Activated B cell treated with CpG ODN at 0.5 μM for 24 hours (primary cell): ENCODE measurements at regions of chr6 and their contacts with region 1.

Region 1: GRCh38 chr6:63598049-63599036 is 26.1 kb downstream of the LOC128125822 start:
- DNase-seq: peak; percentile 53
- ATAC-seq: peak; percentile 100
- H3K4me3 Mint-ChIP-seq: peak overlapping the region; percentile 84
- H3K27ac Mint-ChIP-seq: peak overlapping the region; percentile 35
- H3K4me1 Mint-ChIP-seq: peaks cover 13% of the 10 kb centered on the region
- H3K27me3 Mint-ChIP-seq: no peaks in the 10 kb centered on the region
- CTCF ChIP-seq: peak; percentile 58

Region 2: DNA sequence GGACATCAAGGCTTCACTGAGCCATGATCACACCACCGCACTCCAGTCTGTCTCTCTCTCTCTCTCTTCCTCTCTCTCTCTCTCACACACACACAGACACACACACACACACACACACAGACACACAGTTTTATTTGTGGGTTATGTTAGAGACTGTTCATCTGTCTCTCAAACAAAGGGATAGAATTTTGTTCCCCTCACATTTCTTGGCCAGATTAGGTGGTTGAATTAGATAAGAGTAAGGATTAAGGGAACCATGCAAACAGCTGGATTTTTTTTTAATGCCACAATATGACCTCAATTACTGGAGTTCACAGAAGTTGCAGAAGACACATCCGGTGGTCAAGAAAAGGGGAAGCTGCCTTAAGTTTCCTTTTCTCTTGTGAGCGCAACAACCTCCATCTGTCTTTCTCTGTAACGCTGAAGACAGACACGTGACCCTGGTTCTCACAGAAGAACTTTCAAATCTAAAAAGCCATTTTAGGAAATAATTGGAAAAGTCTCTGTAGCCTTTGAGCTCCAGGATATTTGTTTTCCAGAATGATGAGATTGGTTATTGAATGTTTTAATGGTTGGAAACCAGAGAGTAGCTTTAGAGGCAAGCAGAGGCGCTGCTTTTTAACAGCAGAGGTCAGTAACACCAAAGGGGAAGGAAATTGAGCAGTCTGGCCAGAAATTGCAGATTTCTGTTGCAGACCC is 245.6 kb before region 1 on chr6:
- CTCF ChIA-PET with region 1: interaction called, 11 read pairs
- POLR2A ChIA-PET with region 1: interaction called, 3 read pairs
- intact Hi-C with region 1: loop called (anchors 1 kb)
- DNase-seq: no peak
- ATAC-seq: peak; percentile 77
- H3K4me3 Mint-ChIP-seq: peak overlapping the region; percentile 69
- H3K27ac Mint-ChIP-seq: peak overlapping the region; percentile 63
- H3K4me1 Mint-ChIP-seq: peaks cover 22% of the 10 kb centered on the region
- H3K27me3 Mint-ChIP-seq: no peaks in the 10 kb centered on the region
- CTCF ChIP-seq: no peak

Region 3: DNA sequence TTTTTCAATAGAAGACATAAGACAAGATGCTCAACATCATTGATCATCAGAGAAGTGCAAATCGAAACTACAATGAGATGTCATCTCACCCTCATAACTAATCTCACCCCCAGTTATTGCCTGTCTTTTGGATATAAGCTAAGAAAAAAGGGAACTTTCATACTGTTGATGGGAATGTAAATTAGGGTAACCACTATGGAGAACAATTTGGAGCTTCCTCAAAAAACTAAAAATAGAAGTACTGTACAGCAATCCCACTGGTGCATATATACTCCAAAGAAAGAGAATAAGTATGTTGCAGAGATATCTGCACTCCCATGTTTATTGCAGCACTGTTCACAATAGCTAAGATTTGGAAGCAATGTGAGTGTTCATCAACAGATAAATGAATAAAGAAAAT is 10.9 kb after region 1 on chr6:
- CTCF ChIA-PET with region 1: interaction called, 16 read pairs
- POLR2A ChIA-PET with region 1: interaction called, 5 read pairs
- intact Hi-C with region 1: no loop called
- DNase-seq: no peak
- ATAC-seq: no peak
- H3K4me3 Mint-ChIP-seq: no peak overlapping the region
- H3K27ac Mint-ChIP-seq: no peak overlapping the region
- H3K4me1 Mint-ChIP-seq: no peaks in the 10 kb centered on the region
- H3K27me3 Mint-ChIP-seq: no peaks in the 10 kb centered on the region
- CTCF ChIP-seq: no peak

Region 4: DNA sequence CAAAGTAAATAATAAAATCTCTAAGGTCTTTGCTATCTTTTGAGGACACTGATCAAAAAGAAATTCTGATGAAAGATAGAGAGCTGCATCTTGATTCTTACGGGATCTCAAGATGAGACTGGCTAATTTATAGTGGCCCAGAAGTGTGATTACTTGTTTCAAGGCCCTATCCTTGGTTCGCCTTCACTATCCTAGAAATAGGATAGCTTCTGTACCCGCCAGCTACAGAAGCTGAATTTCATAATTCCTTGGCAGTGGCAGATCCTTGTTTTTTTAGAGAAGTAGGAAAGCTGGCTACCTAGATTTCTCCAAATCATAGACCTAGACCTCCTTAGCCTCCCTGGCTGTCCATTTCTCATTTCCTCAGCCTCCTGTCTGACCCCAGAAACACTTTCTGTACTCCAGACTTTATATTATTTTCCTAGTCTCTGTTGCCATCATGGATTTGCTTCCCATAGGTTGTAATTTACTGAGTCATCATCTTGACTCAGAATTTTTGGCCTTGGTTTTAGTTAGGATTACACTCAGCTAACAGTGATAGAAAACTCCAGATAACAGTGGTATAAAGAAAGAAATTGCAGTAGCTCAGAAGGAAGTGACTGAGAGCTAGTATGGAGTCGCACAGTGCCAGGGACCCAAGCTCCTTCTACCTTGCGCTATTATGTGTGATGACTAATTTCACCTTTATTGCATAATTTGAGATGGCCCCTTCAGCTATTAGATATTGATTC is 65.0 kb after region 1 on chr6:
- CTCF ChIA-PET with region 1: interaction called, 3 read pairs
- POLR2A ChIA-PET with region 1: no interaction called
- intact Hi-C with region 1: loop called (anchors 5 kb)
- DNase-seq: no peak
- ATAC-seq: no peak
- H3K4me3 Mint-ChIP-seq: no peak overlapping the region
- H3K27ac Mint-ChIP-seq: peak overlapping the region; percentile 37
- H3K4me1 Mint-ChIP-seq: peaks cover 68% of the 10 kb centered on the region
- H3K27me3 Mint-ChIP-seq: no peaks in the 10 kb centered on the region
- CTCF ChIP-seq: no peak

Region 5: DNA sequence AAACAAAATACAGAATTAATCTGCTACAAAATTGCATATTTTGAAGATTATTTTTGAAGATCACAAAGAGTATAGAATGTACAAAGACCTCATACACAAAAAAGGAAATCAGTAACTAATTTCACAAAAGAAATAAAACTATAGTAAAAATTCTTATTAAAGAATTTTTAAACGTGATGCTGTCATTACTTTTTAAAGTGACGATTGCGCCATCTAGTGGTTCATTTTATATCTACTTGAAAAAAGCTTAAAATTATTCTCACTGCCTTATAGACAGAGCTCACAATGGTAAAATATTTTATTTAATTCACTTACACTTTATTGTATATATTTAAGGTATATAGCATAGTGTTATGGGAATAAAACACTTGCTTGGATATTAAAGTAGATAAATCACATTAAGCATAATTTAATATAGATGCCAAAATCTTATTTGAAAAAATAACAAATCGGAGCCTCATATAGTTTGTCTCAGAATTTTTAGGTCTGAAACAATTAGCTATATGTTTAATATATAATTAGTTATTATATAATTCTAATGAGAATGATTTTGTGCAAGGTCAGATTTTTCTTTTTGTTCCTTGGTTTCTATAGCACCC is 166.1 kb after region 1 on chr6:
- CTCF ChIA-PET with region 1: interaction called, 169 read pairs
- POLR2A ChIA-PET with region 1: interaction called, 5 read pairs
- intact Hi-C with region 1: loop called (anchors 1 kb)
- DNase-seq: no peak
- ATAC-seq: no peak
- H3K4me3 Mint-ChIP-seq: no peak overlapping the region
- H3K27ac Mint-ChIP-seq: no peak overlapping the region
- H3K4me1 Mint-ChIP-seq: no peaks in the 10 kb centered on the region
- H3K27me3 Mint-ChIP-seq: peaks cover 12% of the 10 kb centered on the region
- CTCF ChIP-seq: no peak

Region 6: DNA sequence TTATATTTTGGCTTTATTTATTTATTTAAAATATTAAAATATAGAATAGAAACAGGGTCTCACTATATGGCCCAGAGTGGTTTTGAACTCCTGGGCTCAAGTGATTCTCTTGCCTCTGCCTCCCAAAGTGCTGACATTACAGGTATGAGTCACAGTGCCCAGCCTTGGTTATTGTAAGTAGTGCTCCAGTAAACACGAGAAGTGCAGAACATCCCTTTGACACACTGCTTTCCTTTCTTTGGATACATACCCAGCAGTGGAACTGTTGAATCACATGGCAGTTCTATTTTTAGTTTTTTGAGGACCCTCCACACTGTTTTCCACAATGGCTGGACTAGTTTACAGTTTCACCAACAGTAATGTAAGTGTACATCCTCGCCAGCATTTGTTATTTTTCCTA is 241.1 kb after region 1 on chr6:
- CTCF ChIA-PET with region 1: no interaction called
- POLR2A ChIA-PET with region 1: no interaction called
- intact Hi-C with region 1: no loop called
- DNase-seq: no peak
- ATAC-seq: no peak
- H3K4me3 Mint-ChIP-seq: no peak overlapping the region
- H3K27ac Mint-ChIP-seq: no peak overlapping the region
- H3K4me1 Mint-ChIP-seq: no peaks in the 10 kb centered on the region
- H3K27me3 Mint-ChIP-seq: no peaks in the 10 kb centered on the region
- CTCF ChIP-seq: no peak